Tibial artery (tissue), 4 donors: ENCODE measurements at regions of chr7 and their contacts with region 1.

Region 1: GRCh38 chr7:135795846-135796570 is 47.4 kb upstream of the FAM180A start:
- DNase-seq: no peak
- H3K4me3 ChIP-seq: no peak overlapping the region
- H3K27ac ChIP-seq: peak overlapping the region; percentile 39 to 60
- H3K4me1 ChIP-seq: peaks cover 0 to 31% (median 8%) of the 10 kb centered on the region in 4 donors
- H3K27me3 ChIP-seq: no peaks in the 10 kb centered on the region
- CTCF ChIP-seq: no peak

Region 2: GRCh38 chr7:135519233-135519688 is 276.7 kb before region 1 on chr7:
- intact Hi-C with region 1: no loop called
- DNase-seq: no peak
- H3K4me3 ChIP-seq: no peak overlapping the region
- H3K27ac ChIP-seq: no peak overlapping the region
- H3K4me1 ChIP-seq: no peaks in the 10 kb centered on the region
- H3K27me3 ChIP-seq: no peaks in the 10 kb centered on the region
- CTCF ChIP-seq: no peak

Region 3: DNA sequence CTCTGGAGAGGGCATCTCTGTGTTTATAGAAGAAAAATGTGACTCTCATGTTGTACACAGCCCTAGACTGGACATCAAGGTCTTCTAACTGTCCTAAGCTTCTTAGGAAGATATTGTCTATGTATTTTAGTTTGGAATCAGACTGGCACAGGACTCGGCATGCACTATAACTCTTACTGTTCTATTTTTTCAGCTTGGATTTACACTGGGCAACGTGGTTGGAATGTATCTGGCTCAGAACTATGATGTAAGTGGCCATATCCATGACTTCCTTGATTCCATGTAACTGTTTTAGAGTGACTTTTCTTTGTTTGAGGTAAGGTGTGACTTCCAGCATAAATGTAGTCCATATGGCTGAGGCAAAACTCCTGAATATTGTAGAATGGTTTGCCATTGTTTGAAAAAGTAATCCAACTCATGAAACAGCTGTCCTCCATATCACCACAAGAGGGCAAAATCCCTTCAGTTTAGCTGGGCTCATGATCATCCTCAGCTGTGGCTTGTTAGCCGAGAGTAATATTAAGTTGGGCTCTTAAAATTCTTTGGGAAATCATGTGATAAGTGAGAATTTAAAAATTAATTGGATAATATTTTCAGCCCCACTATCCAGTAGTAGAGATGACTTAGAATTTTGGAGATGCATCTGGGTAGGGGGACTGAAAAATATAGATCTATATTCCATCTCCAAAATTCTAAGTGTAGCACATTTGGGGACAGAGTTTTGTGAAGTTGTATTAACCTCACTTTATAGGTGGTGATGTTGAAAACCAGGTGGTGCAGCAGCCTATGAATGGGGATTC is 123.2 kb before region 1 on chr7:
- intact Hi-C with region 1: loop called (anchors 5 kb)
- DNase-seq: no peak
- H3K4me3 ChIP-seq: no peak overlapping the region
- H3K27ac ChIP-seq: peak overlapping the region in 1 of 2 donors; percentile 19
- H3K4me1 ChIP-seq: peaks cover 0 to 52% (median 7%) of the 10 kb centered on the region in 4 donors
- H3K27me3 ChIP-seq: no peaks in the 10 kb centered on the region
- CTCF ChIP-seq: peak; percentile 80 to 81

Region 4: GRCh38 chr7:135710417-135711138 is 85.4 kb before region 1 on chr7:
- intact Hi-C with region 1: loop called (anchors 10 kb)
- DNase-seq: no peak
- H3K4me3 ChIP-seq: peak overlapping the region in 1 of 2 donors; percentile 13
- H3K27ac ChIP-seq: peak overlapping the region in 1 of 2 donors; percentile 20
- H3K4me1 ChIP-seq: peaks cover 0 to 19% (median 12%) of the 10 kb centered on the region in 4 donors
- H3K27me3 ChIP-seq: no peaks in the 10 kb centered on the region
- CTCF ChIP-seq: peak in 1 of 2 experiments; percentile 43

Region 5: GRCh38 chr7:135744938-135745702 is 50.9 kb before region 1 on chr7:
- intact Hi-C with region 1: no loop called
- DNase-seq: peak in 1 of 2 donors; percentile 74
- H3K4me3 ChIP-seq: no peak overlapping the region
- H3K27ac ChIP-seq: peak overlapping the region; percentile 80 to 87
- H3K4me1 ChIP-seq: peaks cover 0 to 86% (median 47%) of the 10 kb centered on the region in 4 donors
- H3K27me3 ChIP-seq: no peaks in the 10 kb centered on the region
- CTCF ChIP-seq: no peak